Activated CD4-positive, alpha-beta T cell treated with anti-CD3 and anti-CD28 coated beads for 36 hours (primary cell): ENCODE measurements at regions of chr5 and their contacts with region 1.

Region 1: GRCh38 chr5:178163772-178164735 is 10.4 kb upstream of the NHP2 start:
- DNase-seq: peak; percentile 95
- ATAC-seq: peak; percentile 99
- H3K4me3 Mint-ChIP-seq: peak overlapping the region; percentile 20
- H3K27ac Mint-ChIP-seq: no peak overlapping the region
- H3K4me1 Mint-ChIP-seq: peaks cover 3% of the 10 kb centered on the region
- H3K27me3 Mint-ChIP-seq: peaks cover 23% of the 10 kb centered on the region

Region 2: DNA sequence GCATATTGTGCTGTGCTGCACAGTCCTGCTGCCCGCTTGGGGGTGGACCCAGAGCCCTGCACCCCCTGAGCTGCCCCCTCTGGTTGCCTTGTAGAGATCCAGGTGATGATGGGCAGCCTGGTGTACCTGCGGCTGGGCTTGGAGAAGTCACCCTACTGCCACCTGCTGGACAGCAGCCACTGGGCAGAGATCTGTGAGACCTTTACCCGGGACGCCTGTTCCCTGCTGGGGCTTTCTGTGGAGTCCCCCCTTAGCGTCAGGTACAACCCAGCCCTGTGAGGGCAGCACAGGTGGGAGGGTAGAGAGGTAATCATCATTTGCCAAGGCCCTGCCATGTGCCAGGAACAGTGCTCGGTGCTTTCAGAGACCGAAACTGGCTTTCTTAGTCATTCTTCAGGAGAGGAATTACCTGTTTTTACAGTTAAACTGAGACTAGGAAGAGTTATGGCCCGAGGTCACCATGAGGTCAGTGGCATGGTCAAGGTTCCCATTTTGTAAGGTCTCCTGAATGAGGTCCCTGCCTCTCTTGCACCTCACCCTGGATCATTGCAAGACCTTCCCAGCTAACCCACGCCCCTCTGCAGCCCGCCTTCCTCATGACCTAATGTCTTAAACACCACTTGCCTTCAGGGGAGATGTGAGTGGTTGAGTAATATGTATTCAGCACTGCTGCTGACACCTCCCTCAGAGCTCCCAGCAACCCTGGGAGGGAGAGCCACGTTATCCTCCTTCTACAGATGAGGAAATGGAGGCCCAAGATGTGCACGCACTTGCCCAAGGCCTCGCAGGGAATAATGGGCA is 17.8 kb before region 1 on chr5:
- CTCF ChIA-PET with region 1: interaction called, 3 read pairs
- POLR2A ChIA-PET with region 1: no interaction called
- intact Hi-C with region 1: loop called in 1 of 2 experiments (anchors 1 kb)
- DNase-seq: peak; percentile 83
- ATAC-seq: peak; percentile 73
- H3K4me3 Mint-ChIP-seq: no peak overlapping the region
- H3K27ac Mint-ChIP-seq: peak overlapping the region; percentile 58
- H3K4me1 Mint-ChIP-seq: peaks cover 35% of the 10 kb centered on the region
- H3K27me3 Mint-ChIP-seq: no peaks in the 10 kb centered on the region

Region 3: GRCh38 chr5:178849316-178849715 is 685.3 kb after region 1 on chr5:
- CTCF ChIA-PET with region 1: no interaction called
- POLR2A ChIA-PET with region 1: no interaction called
- intact Hi-C with region 1: no loop called
- DNase-seq: no peak
- ATAC-seq: no peak
- H3K4me3 Mint-ChIP-seq: no peak overlapping the region
- H3K27ac Mint-ChIP-seq: no peak overlapping the region
- H3K4me1 Mint-ChIP-seq: no peaks in the 10 kb centered on the region
- H3K27me3 Mint-ChIP-seq: peaks cover 13% of the 10 kb centered on the region

Region 4: GRCh38 chr5:180018347-180019060 is 1854.5 kb after region 1 on chr5:
- CTCF ChIA-PET with region 1: no interaction called
- POLR2A ChIA-PET with region 1: no interaction called
- intact Hi-C with region 1: no loop called
- DNase-seq: no peak
- ATAC-seq: no peak
- H3K4me3 Mint-ChIP-seq: no peak overlapping the region
- H3K27ac Mint-ChIP-seq: no peak overlapping the region
- H3K4me1 Mint-ChIP-seq: no peaks in the 10 kb centered on the region
- H3K27me3 Mint-ChIP-seq: no peaks in the 10 kb centered on the region